ENCODE measurements at regions of chr5 and their contacts with region 1.

Region 1: DNA sequence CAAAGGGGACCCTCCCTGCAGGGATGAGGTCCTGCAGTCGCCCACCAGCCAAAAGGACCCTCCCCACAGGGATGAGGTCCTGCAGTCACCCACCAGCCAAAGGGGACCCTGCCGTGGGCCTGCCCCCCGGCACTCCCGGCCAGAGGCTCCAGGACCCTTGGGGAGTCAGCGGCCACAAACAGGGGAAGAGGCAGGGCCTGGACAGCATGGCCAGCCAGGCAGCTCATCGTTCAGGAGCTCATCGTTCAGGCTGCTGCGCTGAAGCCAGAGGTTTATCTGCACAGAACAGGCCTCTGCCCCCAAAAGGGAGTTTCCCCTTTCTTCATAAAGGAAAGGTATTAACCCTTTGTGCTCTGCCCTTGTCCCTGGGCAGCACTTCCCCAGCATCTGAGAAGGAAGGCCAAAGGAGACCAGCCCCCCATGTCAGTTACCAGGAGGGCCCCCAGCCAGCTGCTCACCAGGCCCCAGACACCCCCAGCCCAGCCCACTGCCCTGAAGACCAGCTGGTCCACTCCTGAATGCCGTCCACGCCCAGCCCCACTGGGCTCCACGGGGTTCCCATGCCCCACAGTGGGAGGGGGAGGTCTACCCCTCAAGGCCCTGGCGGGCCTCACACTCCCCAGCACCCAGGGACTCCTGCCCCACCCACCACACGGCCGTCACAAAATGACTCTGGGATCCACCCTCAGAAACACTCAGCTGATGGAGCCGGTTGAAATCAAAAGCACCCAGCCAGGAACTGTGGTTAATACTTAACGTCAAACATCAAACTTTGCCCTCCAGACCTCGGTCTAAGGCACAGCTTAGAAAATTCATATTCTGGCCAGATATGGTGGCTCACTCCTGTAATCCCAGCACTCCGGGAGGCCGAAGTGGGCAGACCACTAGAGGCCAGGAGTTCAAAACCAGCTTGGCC is 6.3 kb downstream of the SLC12A7 start:
- DNase-seq: peak; percentile 50 to 86 (median 83)
- ATAC-seq: peak; percentile 82
- H3K4me3 ChIP-seq: peak overlapping the region; percentile 77
- H3K4me3 Mint-ChIP-seq: peak overlapping the region; percentile 77 to 94 (median 88)
- H3K27ac ChIP-seq: peak overlapping the region; percentile 89
- H3K27ac Mint-ChIP-seq: peak overlapping the region; percentile 85 to 100 (median 97)
- H3K4me1 ChIP-seq: peaks cover 37 to 79% of the 10 kb centered on the region in 2 donors
- H3K4me1 Mint-ChIP-seq: peaks cover 48 to 90% (median 69%) of the 10 kb centered on the region in 7 donors
- H3K27me3 ChIP-seq: no peaks in the 10 kb centered on the region
- H3K27me3 Mint-ChIP-seq: no peaks in the 10 kb centered on the region

Region 2: GRCh38 chr5:573976-574375 is 531.6 kb before region 1 on chr5:
- CTCF ChIA-PET with region 1: no interaction called
- POLR2A ChIA-PET with region 1: no interaction called
- intact Hi-C with region 1: no loop called
- DNase-seq: no peak
- ATAC-seq: no peak
- H3K4me3 ChIP-seq: no peak overlapping the region
- H3K4me3 Mint-ChIP-seq: no peak overlapping the region
- H3K27ac ChIP-seq: no peak overlapping the region
- H3K27ac Mint-ChIP-seq: no peak overlapping the region
- H3K4me1 ChIP-seq: no peaks in the 10 kb centered on the region
- H3K4me1 Mint-ChIP-seq: peaks cover 0 to 2% (median 0%) of the 10 kb centered on the region in 7 donors
- H3K27me3 ChIP-seq: peaks cover 0 to 3% of the 10 kb centered on the region in 2 donors
- H3K27me3 Mint-ChIP-seq: peaks cover 22 to 43% (median 36%) of the 10 kb centered on the region in 5 donors

Region 3: GRCh38 chr5:776792-777711 is 328.6 kb before region 1 on chr5:
- CTCF ChIA-PET with region 1: no interaction called
- POLR2A ChIA-PET with region 1: no interaction called
- intact Hi-C with region 1: loop called in 1 of 2 experiments (anchors 5 kb)
- DNase-seq: no peak
- ATAC-seq: no peak
- H3K4me3 ChIP-seq: no peak overlapping the region
- H3K4me3 Mint-ChIP-seq: no peak overlapping the region
- H3K27ac ChIP-seq: no peak overlapping the region
- H3K27ac Mint-ChIP-seq: no peak overlapping the region
- H3K4me1 ChIP-seq: no peaks in the 10 kb centered on the region
- H3K4me1 Mint-ChIP-seq: no peaks in the 10 kb centered on the region
- H3K27me3 ChIP-seq: no peaks in the 10 kb centered on the region
- H3K27me3 Mint-ChIP-seq: peaks cover 0 to 4% (median 0%) of the 10 kb centered on the region in 5 donors

Region 4: GRCh38 chr5:1052641-1053390 is 52.8 kb before region 1 on chr5:
- CTCF ChIA-PET with region 1: no interaction called
- POLR2A ChIA-PET with region 1: no interaction called
- intact Hi-C with region 1: loop called in 1 of 2 experiments (anchors 10 kb)
- DNase-seq: no peak
- ATAC-seq: no peak
- H3K4me3 ChIP-seq: no peak overlapping the region
- H3K4me3 Mint-ChIP-seq: no peak overlapping the region
- H3K27ac ChIP-seq: no peak overlapping the region
- H3K27ac Mint-ChIP-seq: no peak overlapping the region
- H3K4me1 ChIP-seq: no peaks in the 10 kb centered on the region
- H3K4me1 Mint-ChIP-seq: peaks cover 0 to 4% (median 0%) of the 10 kb centered on the region in 7 donors
- H3K27me3 ChIP-seq: no peaks in the 10 kb centered on the region
- H3K27me3 Mint-ChIP-seq: no peaks in the 10 kb centered on the region